A673 (cell line): ENCODE measurements at regions of chr5 and their contacts with region 1.

Region 1: GRCh38 chr5:133025804-133026663 is at the start of gene ZCCHC10:
- DNase-seq: peak; percentile 98
- H3K4me3 ChIP-seq: peak within 1 kb of the TSS; percentile 96
- H3K27ac ChIP-seq: peak within 1 kb of the TSS; percentile 98
- H3K4me1 ChIP-seq: no peaks in the 10 kb centered on the region
- H3K27me3 ChIP-seq: no peaks in the 10 kb centered on the region
- CTCF ChIP-seq: no peak
- total RNA-seq, gene ZCCHC10: 31.2 and 33.4 TPM in 2 replicates

Region 2: GRCh38 chr5:133041910-133042309 is 15.9 kb after region 1 on chr5:
- CTCF ChIA-PET with region 1: no interaction called
- POLR2A ChIA-PET with region 1: interaction called, 10 read pairs
- intact Hi-C with region 1: no loop called
- DNase-seq: no peak
- H3K4me3 ChIP-seq: no peak overlapping the region
- H3K27ac ChIP-seq: no peak overlapping the region
- H3K4me1 ChIP-seq: no peaks in the 10 kb centered on the region
- H3K27me3 ChIP-seq: no peaks in the 10 kb centered on the region
- CTCF ChIP-seq: no peak

Region 3: GRCh38 chr5:133051580-133052332 is 25.7 kb after region 1 on chr5 and contains the start of gene HSPA4:
- CTCF ChIA-PET with region 1: no interaction called
- POLR2A ChIA-PET with region 1: no interaction called
- intact Hi-C with region 1: loop called (anchors 1 kb)
- DNase-seq: peak; percentile 99
- H3K4me3 ChIP-seq: peak within 1 kb of the TSS; percentile 92
- H3K27ac ChIP-seq: peak within 1 kb of the TSS; percentile 99
- H3K4me1 ChIP-seq: peaks cover 18% of the 10 kb centered on the region
- H3K27me3 ChIP-seq: no peaks in the 10 kb centered on the region
- CTCF ChIP-seq: no peak
- total RNA-seq, gene HSPA4: 323 and 337 TPM in 2 replicates